CD8-positive, alpha-beta T cell (primary cell): ENCODE measurements at regions of chr5 and their contacts with region 1.

Region 1: GRCh38 chr5:178626484-178627258 is at the start of gene CLK4:
- DNase-seq: peak; percentile 94 to 98 (median 97)
- ATAC-seq: peak; percentile 86
- H3K4me3 ChIP-seq: peak within 1 kb of the TSS; percentile 84 to 94
- H3K4me3 Mint-ChIP-seq: peak within 1 kb of the TSS; percentile 99
- H3K27ac ChIP-seq: peak within 1 kb of the TSS; percentile 91 to 97
- H3K27ac Mint-ChIP-seq: peak within 1 kb of the TSS; percentile 100
- H3K4me1 ChIP-seq: peaks cover 34% of the 10 kb centered on the region
- H3K4me1 Mint-ChIP-seq: peaks cover 38% of the 10 kb centered on the region
- H3K27me3 ChIP-seq: no peaks in the 10 kb centered on the region
- H3K27me3 Mint-ChIP-seq: no peaks in the 10 kb centered on the region
- CTCF ChIP-seq: no peak
- total RNA-seq, gene CLK4: 104 to 106 TPM

Region 2: GRCh38 chr5:177133091-177133852 is 1493.4 kb before region 1 on chr5 and contains the start of gene NSD1:
- CTCF ChIA-PET with region 1: no interaction called
- POLR2A ChIA-PET with region 1: no interaction called
- intact Hi-C with region 1: loop called in 1 of 2 experiments (anchors 10 kb)
- DNase-seq: peak; percentile 81 to 96 (median 89)
- ATAC-seq: peak; percentile 72
- H3K4me3 ChIP-seq: peak within 1 kb of the TSS; percentile 58 to 60
- H3K4me3 Mint-ChIP-seq: peak within 1 kb of the TSS; percentile 85
- H3K27ac ChIP-seq: peak within 1 kb of the TSS; percentile 64 to 85
- H3K27ac Mint-ChIP-seq: peak within 1 kb of the TSS; percentile 90
- H3K4me1 ChIP-seq: peaks cover 54% of the 10 kb centered on the region
- H3K4me1 Mint-ChIP-seq: peaks cover 55% of the 10 kb centered on the region
- H3K27me3 ChIP-seq: no peaks in the 10 kb centered on the region
- H3K27me3 Mint-ChIP-seq: no peaks in the 10 kb centered on the region
- CTCF ChIP-seq: no peak
- total RNA-seq, gene NSD1: 71.8 to 75.2 TPM

Region 3: DNA sequence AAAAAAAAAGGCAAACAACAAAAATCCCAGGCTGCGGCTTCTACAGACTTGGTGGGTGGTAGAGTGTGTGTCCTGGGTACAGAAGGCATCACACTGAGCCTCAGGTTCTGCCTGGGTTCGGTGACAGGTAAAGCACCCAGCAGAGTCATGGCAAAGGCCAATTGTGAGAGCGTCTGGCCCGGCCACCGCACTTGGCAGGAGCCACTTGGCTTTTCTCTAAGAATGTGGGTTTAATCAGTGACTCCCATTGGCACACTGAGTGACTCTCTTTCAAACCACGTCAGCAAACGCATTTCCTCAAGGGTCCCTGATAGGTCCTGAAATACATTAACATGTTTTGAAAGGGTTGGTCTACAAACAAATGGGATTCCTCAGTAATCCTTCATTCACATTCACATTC is 53.5 kb before region 1 on chr5:
- CTCF ChIA-PET with region 1: no interaction called
- POLR2A ChIA-PET with region 1: no interaction called
- intact Hi-C with region 1: no loop called
- DNase-seq: no peak
- ATAC-seq: no peak
- H3K4me3 ChIP-seq: no peak overlapping the region
- H3K4me3 Mint-ChIP-seq: no peak overlapping the region
- H3K27ac ChIP-seq: no peak overlapping the region
- H3K27ac Mint-ChIP-seq: no peak overlapping the region
- H3K4me1 ChIP-seq: no peaks in the 10 kb centered on the region
- H3K4me1 Mint-ChIP-seq: no peaks in the 10 kb centered on the region
- H3K27me3 ChIP-seq: peaks cover 0 to 8% of the 10 kb centered on the region in 2 experiments
- H3K27me3 Mint-ChIP-seq: peaks cover 40% of the 10 kb centered on the region
- CTCF ChIP-seq: no peak

Region 4: DNA sequence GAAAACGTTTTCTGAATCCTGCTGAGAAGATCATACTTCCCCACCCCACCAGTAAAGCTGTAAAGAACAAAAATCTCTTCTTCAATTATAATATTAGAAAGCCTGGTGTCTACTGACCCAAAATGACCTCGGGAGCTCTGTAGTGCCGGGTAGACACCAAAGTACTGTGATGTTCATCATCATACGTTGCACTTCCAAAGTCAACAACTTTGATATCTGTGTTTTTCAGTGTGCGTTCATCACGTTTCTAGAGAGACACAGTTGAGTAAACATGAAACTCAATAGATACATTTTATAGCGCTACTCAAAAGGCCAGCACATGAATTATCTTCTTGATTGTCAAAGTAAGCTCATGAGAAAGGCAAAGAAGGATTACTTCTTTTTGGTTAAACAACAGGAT is 14.4 kb before region 1 on chr5:
- CTCF ChIA-PET with region 1: interaction called, 3 read pairs
- POLR2A ChIA-PET with region 1: interaction called, 10 read pairs
- intact Hi-C with region 1: no loop called
- DNase-seq: no peak
- ATAC-seq: no peak
- H3K4me3 ChIP-seq: no peak overlapping the region
- H3K4me3 Mint-ChIP-seq: no peak overlapping the region
- H3K27ac ChIP-seq: no peak overlapping the region
- H3K27ac Mint-ChIP-seq: peak overlapping the region; percentile 25
- H3K4me1 ChIP-seq: no peaks in the 10 kb centered on the region
- H3K4me1 Mint-ChIP-seq: peaks cover 31% of the 10 kb centered on the region
- H3K27me3 ChIP-seq: no peaks in the 10 kb centered on the region
- H3K27me3 Mint-ChIP-seq: no peaks in the 10 kb centered on the region
- CTCF ChIP-seq: no peak

Region 5: GRCh38 chr5:179023528-179024430 is 397.1 kb after region 1 on chr5 and contains the start of gene ZNF879:
- CTCF ChIA-PET with region 1: no interaction called
- POLR2A ChIA-PET with region 1: no interaction called
- intact Hi-C with region 1: loop called (anchors 2 kb)
- DNase-seq: peak; percentile 86 to 97 (median 94)
- ATAC-seq: peak; percentile 92
- H3K4me3 ChIP-seq: peak within 1 kb of the TSS; percentile 51 to 70
- H3K4me3 Mint-ChIP-seq: peak within 1 kb of the TSS; percentile 96
- H3K27ac ChIP-seq: peak within 1 kb of the TSS; percentile 50 to 59
- H3K27ac Mint-ChIP-seq: peak within 1 kb of the TSS; percentile 82
- H3K4me1 ChIP-seq: peaks cover 9% of the 10 kb centered on the region
- H3K4me1 Mint-ChIP-seq: peaks cover 17% of the 10 kb centered on the region
- H3K27me3 ChIP-seq: no peaks in the 10 kb centered on the region
- H3K27me3 Mint-ChIP-seq: peaks cover 7% of the 10 kb centered on the region
- CTCF ChIP-seq: no peak
- total RNA-seq, gene ZNF879: 4.5 to 5.8 TPM

Region 6: DNA sequence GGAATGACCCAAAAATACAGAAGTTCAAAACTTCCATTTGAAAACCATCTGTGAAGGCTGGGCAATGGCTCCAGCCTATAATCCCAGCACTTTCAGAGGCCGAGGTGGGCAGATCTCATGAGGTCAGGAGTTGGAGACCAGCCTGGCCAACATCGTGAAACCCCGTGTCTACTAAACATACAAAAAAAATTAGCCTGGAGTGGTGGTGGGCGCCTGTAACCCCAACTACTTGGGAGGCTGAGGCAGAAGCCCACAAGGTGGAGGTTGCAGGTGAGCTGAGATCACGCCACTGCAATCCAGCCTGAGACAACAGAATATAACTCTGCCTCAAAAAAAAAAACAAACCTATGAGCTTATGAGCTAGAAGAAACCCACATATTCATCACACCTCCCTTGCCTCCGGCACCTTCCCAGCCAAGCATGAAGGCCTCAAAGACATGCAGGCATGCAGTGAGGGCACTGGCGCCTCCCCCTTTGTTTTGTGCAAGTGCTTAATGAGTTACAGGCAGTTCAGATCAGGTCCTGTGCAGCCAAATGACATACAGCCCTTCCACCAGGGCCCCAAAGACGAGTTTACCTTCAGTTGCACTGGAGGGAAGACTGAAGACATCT is 986.9 kb after region 1 on chr5:
- CTCF ChIA-PET with region 1: no interaction called
- POLR2A ChIA-PET with region 1: no interaction called
- intact Hi-C with region 1: loop called in 1 of 2 experiments (anchors 10 kb)
- DNase-seq: peak in 1 of 9 experiments; percentile 40
- ATAC-seq: peak; percentile 39
- H3K4me3 ChIP-seq: no peak overlapping the region
- H3K4me3 Mint-ChIP-seq: no peak overlapping the region
- H3K27ac ChIP-seq: no peak overlapping the region
- H3K27ac Mint-ChIP-seq: peak overlapping the region; percentile 6
- H3K4me1 ChIP-seq: peaks cover 50% of the 10 kb centered on the region
- H3K4me1 Mint-ChIP-seq: peaks cover 70% of the 10 kb centered on the region
- H3K27me3 ChIP-seq: no peaks in the 10 kb centered on the region
- H3K27me3 Mint-ChIP-seq: no peaks in the 10 kb centered on the region
- CTCF ChIP-seq: no peak

Region 7: GRCh38 chr5:180494060-180494509 is 1867.4 kb after region 1 on chr5 and contains the start of gene CNOT6:
- CTCF ChIA-PET with region 1: no interaction called
- POLR2A ChIA-PET with region 1: no interaction called
- intact Hi-C with region 1: loop called (anchors 10 kb)
- DNase-seq: peak; percentile 90 to 98 (median 95)
- ATAC-seq: peak; percentile 91
- H3K4me3 ChIP-seq: peak within 1 kb of the TSS; percentile 64
- H3K4me3 Mint-ChIP-seq: peak within 1 kb of the TSS; percentile 98
- H3K27ac ChIP-seq: peak within 1 kb of the TSS; percentile 80 to 88
- H3K27ac Mint-ChIP-seq: peak within 1 kb of the TSS; percentile 99
- H3K4me1 ChIP-seq: peaks cover 16% of the 10 kb centered on the region
- H3K4me1 Mint-ChIP-seq: peaks cover 40% of the 10 kb centered on the region
- H3K27me3 ChIP-seq: no peaks in the 10 kb centered on the region
- H3K27me3 Mint-ChIP-seq: no peaks in the 10 kb centered on the region
- CTCF ChIP-seq: no peak
- total RNA-seq, gene CNOT6: 13.1 to 13.9 TPM